Motor neuron (in vitro differentiated cells): ENCODE measurements at regions of chr7 and their contacts with region 1.

Region 1: DNA sequence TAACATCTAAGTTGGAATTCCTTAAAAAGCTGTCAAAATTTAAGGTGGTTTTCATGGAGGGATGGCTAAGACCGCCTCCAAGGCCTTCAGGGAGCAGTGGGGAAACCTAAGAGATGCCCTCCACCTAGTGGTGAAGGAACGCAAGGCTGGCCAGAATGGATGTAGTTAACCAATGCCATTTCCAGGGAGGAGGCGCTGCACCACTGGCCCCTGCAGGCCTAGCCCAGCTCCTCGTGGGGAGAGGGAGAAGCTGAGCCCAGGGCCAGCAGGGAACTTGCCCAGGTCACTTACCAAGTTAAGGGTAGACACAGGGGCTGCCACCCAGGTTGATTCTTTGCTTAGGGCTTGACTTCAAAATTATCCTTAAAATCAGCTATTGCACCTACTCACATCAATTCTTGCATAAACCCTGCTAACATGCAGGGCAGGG is 32.0 kb downstream of the FIGNL1 start:
- ATAC-seq: peak; percentile 85 to 100 (median 93)
- H3K4me3 ChIP-seq: no peak overlapping the region
- H3K27ac ChIP-seq: no peak overlapping the region
- H3K4me1 ChIP-seq: no peaks in the 10 kb centered on the region

Region 2: DNA sequence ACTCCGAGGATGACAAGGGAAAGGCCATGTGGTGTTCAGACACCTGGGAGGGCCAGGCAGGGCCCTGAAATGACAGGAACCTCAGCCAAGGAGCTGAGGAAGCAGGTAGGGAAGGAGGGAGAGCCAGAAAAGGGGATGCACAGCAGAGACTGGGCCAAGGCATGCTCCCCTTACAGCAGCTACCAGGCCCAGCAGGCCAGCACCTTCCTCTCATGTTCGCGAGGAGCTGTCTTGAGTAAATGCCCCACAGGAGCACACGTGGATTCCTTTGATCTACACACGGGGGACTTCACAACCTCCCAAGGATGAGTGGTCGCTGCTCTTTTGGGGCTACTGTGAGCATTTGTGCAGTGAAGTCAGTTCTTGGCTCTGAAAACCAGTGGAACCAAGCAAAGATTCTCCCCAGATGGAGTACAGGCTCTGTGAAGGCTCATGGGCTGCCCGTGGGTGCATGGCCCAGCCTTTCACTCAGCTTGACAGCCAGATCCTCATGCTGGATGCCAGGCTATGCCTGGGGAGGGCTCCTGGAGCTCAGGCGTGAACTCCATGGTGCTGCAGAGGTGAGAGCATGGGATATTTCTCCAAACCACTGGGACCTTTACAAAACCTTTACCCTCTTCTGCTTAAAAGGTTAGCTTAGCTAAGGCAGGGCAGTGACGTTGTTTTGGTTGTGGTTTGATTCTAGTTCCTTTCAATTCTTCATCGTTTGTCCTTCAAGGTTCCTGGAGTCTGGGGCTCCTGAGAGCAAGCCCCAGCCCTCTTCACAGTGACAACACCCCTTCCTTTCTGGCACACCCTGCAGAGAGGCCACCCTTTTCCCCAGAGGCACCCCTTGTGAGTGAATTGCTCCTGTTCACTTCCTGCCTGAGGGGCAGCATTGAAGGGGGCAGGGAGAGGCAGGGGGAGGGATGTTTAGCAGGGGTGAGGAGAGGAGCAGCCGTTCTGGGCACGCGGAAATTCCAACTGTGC is 250.8 kb before region 1 on chr7:
- in situ Hi-C with region 1: loop called in 1 of 9 experiments (anchors 25 kb)
- ATAC-seq: no peak
- H3K4me3 ChIP-seq: no peak overlapping the region
- H3K27ac ChIP-seq: no peak overlapping the region
- H3K4me1 ChIP-seq: no peaks in the 10 kb centered on the region

Region 3: DNA sequence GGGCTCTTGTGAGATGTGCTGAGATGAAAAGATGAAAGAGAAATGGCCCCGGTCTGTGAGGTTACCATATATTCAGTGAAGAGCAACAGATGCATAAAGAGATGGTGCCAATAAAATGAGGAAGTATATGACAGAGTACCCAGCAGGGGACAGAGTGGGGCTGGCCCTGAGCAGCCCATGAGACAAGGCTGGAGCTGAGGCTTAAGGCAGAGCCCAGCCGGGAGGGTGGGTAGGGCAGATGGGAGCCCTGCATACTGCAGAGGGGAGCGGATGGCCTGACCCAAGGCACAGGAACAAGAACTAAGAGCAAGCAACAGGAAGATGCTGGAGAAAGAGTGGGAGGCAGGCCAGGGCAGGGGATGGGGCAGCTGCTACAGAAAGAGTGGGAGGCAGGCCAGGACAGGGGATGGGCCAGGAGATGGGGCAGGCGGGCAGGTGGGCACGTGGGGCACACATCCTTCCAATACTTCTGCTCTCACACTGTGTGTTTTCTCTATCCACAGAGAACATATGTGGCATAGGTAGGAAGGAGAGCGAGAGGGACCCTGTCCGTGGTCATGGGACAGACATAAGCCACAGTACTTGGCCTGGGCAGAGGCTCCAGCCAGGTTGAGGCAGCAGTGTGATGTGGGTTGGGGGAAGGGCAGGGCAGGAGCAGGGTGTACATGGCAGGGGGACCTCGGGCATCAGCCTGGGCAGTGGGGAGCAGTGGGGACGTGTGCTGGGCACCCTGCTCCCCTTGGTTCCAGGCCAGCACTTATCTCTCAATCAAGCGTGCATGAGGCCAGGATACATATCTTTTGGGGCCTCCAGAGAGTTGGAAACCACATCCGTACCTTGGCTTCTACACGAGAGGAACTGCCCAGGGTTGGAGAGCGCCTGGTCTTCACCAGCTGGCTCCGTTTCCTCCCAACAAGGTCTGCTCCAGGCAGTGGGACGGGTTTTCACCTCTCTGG is 205.2 kb before region 1 on chr7:
- in situ Hi-C with region 1: loop called in 2 of 9 experiments (anchors 25 kb)
- ATAC-seq: no peak
- H3K4me3 ChIP-seq: no peak overlapping the region
- H3K27ac ChIP-seq: no peak overlapping the region
- H3K4me1 ChIP-seq: no peaks in the 10 kb centered on the region